Posterior vena cava (tissue), 2 donors: ENCODE measurements at regions of chr2 and their contacts with region 1.

Region 1: GRCh38 chr2:26509141-26509540 is 31.2 kb upstream of the OTOF start:
- DNase-seq: no peak

Region 2: GRCh38 chr2:26555246-26556133 is 46.3 kb after region 1 on chr2:
- intact Hi-C with region 1: no loop called
- DNase-seq: peak; percentile 54

Region 3: DNA sequence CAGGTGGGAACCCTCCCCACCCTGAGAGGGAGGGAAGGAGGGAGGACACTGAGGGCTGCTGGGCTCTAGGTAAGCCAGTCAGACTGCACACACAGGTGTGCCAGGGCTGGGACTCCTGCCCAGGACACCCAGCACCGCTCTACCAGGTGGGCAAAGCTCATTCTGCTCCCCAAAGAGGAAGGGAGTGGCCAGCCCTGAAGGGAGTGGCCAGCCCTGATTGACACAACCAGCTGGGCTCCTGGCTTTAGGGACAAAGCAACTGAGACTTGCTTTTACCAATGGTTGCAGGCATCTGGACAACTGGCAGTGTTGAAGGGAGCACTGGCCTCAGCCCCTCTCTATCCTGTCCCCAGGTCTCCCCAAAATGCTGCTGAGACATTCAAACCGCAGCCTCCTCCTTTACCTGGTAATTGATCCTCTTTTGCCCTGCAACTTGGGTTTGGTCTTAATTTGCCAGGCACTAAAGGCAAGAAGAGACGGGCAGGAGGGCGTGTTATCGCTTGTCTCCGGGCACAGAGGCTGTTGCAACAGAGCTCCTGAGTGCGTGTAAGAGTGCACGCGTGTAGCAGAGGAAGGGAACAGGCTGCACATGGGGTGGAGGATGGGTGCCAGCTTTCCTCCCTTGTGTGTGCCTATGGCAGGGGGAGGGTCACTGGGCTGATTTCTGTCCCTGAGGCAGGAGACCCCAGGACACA is 1869.0 kb after region 1 on chr2:
- intact Hi-C with region 1: loop called in 1 of 2 experiments (anchors 5 kb)
- DNase-seq: no peak